ENCODE measurements at regions of chr2 and their contacts with region 1.

Region 1: GRCh38 chr2:162123806-162124758 is 28.0 kb downstream of the GCG start:
- DNase-seq: peak; percentile 9
- ATAC-seq: peak; percentile 57
- H3K4me3 ChIP-seq: no peak overlapping the region
- H3K27ac ChIP-seq: no peak overlapping the region
- H3K4me1 ChIP-seq: peaks cover 7% of the 10 kb centered on the region; the same call in 1 of the 2 replicates
- H3K27me3 ChIP-seq: no peaks in the 10 kb centered on the region
- CTCF ChIP-seq: peak; percentile 48 to 71 (median 55); a peak in 5 of 6 replicates
- EP300 ChIP-seq: no peak
- POLR2A ChIP-seq: no peak
- RAD21 ChIP-seq: peak; percentile 69

Region 2: DNA sequence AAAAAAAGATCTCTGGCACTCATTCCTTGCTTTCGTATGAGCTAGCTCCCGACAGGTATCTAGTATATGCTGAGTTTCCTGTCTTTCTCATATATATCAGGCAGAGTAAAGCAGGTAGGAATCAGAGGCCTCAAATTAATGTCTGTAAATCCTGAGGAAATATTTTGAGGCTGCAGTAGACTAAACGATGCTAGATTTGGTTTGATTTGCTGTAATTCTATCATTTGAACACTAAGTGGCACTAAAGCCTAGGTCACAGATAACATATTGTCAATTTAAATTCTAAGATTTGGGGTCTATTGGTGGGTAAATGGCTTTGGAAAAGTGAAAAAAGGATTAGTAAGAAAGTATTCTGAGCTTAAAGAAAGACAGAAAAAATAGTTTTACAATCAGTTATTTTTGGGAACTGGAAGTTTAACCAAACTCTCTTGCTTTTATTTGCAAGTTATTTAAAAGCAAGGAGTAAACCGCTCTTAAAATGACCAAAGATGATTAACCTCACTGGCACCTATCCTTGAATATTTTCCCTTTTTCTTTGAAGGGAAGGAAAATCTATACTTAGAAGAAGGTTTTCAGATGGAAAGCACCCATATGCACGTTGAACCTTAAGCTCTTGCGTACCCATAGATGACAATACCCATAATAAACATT is 537.4 kb before region 1 on chr2:
- CTCF ChIA-PET with region 1: interaction called, 41 read pairs
- POLR2A ChIA-PET with region 1: no interaction called
- RAD21 ChIA-PET with region 1: interaction called, 3 read pairs
- SMC1A ChIA-PET with region 1: interaction called, 14 read pairs
- in situ Hi-C with region 1: loop called (anchors 5 kb)
- intact Hi-C with region 1: loop called (anchors 2 kb)
- DNase-seq: no peak
- ATAC-seq: peak; percentile 60; the same call in 2 of the 3 replicates
- H3K4me3 ChIP-seq: no peak overlapping the region
- H3K27ac ChIP-seq: no peak overlapping the region
- H3K4me1 ChIP-seq: no peaks in the 10 kb centered on the region
- H3K27me3 ChIP-seq: no peaks in the 10 kb centered on the region
- CTCF ChIP-seq: peak; percentile 60 to 65 (median 61)
- EP300 ChIP-seq: no peak
- POLR2A ChIP-seq: no peak
- RAD21 ChIP-seq: peak; percentile 80

Region 3: DNA sequence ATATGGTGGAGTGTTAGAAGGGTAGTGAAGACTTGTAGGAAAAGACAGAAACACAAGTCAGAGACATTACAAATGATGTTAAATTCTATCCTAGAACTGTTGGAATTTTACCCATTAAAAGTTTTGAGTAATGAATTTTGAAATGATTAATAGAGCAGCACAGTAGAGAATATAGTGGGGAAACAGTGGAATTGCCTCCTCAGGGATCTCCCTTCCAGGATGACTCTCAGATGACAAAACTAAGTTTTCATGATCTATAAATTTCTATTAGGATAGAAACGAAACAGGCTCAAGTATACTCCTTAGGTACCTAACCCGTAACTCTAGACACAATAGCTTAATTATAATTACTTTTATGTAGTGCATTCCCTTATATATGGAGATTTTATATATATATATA is 136.8 kb before region 1 on chr2:
- CTCF ChIA-PET with region 1: interaction called, 12 read pairs
- POLR2A ChIA-PET with region 1: no interaction called
- RAD21 ChIA-PET with region 1: interaction called, 9 read pairs
- SMC1A ChIA-PET with region 1: interaction called, 9 read pairs
- in situ Hi-C with region 1: no loop called
- intact Hi-C with region 1: no loop called
- DNase-seq: no peak
- ATAC-seq: no peak
- H3K4me3 ChIP-seq: no peak overlapping the region
- H3K27ac ChIP-seq: no peak overlapping the region
- H3K4me1 ChIP-seq: peaks cover under 1% of the 10 kb centered on the region; the same call in 1 of the 2 replicates
- H3K27me3 ChIP-seq: no peaks in the 10 kb centered on the region
- CTCF ChIP-seq: no peak
- EP300 ChIP-seq: no peak
- POLR2A ChIP-seq: no peak
- RAD21 ChIP-seq: no peak

Region 4: DNA sequence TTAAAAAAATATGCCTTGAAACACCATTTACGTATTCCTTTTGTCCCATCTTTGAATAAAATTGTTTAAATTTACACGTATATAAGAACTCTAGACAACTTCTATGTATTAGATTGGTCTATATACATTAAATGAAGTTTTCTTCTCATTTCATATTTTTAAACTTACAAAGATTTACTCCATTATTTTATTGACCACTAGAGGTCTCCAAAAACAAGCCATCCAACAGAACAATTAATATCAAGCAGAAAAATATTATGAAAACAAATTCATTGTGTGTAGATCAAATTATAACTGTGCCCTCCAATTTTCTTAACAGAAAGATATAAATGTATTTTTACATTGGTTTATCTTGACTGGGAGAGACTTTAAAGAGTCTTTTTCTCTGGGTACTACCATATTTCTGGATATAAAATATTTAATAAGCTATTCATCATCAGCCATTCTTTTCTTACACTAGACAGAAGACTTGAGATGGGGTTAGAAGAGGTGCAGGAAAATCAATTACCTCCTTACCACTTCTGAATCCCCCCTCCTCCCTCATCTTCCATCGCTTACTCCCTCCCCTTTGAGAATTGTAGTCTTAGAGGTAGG is 116.5 kb before region 1 on chr2:
- CTCF ChIA-PET with region 1: interaction called, 79 read pairs
- POLR2A ChIA-PET with region 1: no interaction called
- RAD21 ChIA-PET with region 1: interaction called, 29 read pairs
- SMC1A ChIA-PET with region 1: interaction called, 90 read pairs
- in situ Hi-C with region 1: loop called (anchors 5 kb)
- intact Hi-C with region 1: loop called (anchors 1 kb)
- DNase-seq: no peak
- ATAC-seq: peak; percentile 33; the same call in 1 of the 3 replicates
- H3K4me3 ChIP-seq: no peak overlapping the region
- H3K27ac ChIP-seq: no peak overlapping the region
- H3K4me1 ChIP-seq: no peaks in the 10 kb centered on the region
- H3K27me3 ChIP-seq: no peaks in the 10 kb centered on the region
- CTCF ChIP-seq: peak; percentile 34 to 60 (median 42); a peak in 3 of 6 replicates
- EP300 ChIP-seq: no peak
- POLR2A ChIP-seq: no peak
- RAD21 ChIP-seq: peak; percentile 64

Region 5: DNA sequence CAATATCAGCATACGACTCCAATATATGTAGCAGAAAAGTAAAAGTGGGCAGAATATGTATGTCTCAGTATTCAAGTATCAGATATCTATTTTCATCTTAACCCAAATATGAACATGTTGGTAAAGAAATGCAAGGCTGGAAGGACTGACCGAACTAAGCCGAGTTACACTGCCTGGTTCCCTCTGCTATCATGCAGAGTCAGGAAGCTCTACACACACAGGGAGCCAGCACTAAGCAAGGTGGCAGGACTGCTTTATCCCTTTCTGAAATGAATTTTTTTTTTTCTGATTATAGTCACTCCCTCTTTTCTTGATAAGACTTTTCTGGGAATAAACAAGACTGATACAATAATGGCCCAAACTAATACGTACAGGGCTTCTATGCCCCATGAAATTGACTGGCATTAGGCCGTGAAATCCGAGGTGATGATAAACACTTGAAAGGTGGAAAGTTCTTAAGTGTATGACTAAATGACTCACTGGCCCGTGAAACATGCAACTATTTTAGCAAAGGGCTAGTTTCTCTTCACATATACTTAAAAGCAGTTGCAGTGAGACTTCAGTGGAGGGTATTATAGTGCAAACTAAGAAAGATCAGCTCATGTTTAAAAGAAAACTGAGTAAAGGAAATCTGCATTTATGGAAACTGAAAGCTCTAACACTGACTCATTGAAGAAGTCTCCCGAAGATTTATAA is 65.0 kb before region 1 on chr2:
- CTCF ChIA-PET with region 1: interaction called, 12 read pairs
- POLR2A ChIA-PET with region 1: interaction called, 7 read pairs
- RAD21 ChIA-PET with region 1: interaction called, 13 read pairs
- SMC1A ChIA-PET with region 1: interaction called, 32 read pairs
- in situ Hi-C with region 1: no loop called
- intact Hi-C with region 1: no loop called
- DNase-seq: peak; percentile 84
- ATAC-seq: peak; percentile 82
- H3K4me3 ChIP-seq: peak overlapping the region; percentile 8; the same call in 1 of the 2 replicates
- H3K27ac ChIP-seq: peak overlapping the region; percentile 78
- H3K4me1 ChIP-seq: peaks cover 57% of the 10 kb centered on the region
- H3K27me3 ChIP-seq: no peaks in the 10 kb centered on the region
- CTCF ChIP-seq: no peak
- EP300 ChIP-seq: peak; percentile 37 to 79; a peak in 2 of 4 replicates
- POLR2A ChIP-seq: no peak
- RAD21 ChIP-seq: no peak

Region 6: DNA sequence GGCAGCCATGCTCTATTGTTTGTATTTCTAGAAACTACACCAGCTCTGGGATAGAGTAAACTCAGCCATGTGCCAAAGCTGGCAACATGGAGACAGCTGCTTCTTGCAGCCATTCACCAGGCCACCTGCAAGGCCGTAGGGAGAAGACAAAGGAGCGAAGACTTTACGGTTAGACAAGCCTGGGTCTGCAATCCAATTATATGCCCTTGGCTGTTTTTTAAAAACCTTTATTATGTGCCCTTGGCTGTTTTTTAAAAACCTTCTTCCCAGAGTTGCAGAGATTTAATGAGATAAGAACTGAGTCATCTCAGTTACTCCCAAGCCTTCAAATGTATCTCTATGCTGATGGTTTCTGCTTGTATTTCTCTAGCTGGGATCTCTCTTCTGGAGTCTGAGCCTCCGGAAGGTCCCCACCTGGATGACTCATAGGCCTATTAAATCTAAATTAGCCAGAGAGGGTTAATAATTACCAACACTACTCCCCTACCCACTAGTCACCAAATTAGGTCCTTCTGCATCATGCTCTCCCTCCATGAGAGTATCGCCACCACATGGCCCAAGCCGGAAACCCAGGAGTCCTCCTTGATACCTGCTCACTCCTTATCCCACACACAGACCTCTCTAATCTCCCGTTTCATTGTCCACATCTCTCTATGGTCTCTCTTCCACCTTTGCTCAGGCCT is 32.6 kb before region 1 on chr2:
- CTCF ChIA-PET with region 1: interaction called, 24 read pairs
- POLR2A ChIA-PET with region 1: no interaction called
- RAD21 ChIA-PET with region 1: interaction called, 3 read pairs
- SMC1A ChIA-PET with region 1: interaction called, 3 read pairs
- in situ Hi-C with region 1: no loop called
- intact Hi-C with region 1: no loop called
- DNase-seq: no peak
- ATAC-seq: peak; percentile 90
- H3K4me3 ChIP-seq: no peak overlapping the region
- H3K27ac ChIP-seq: no peak overlapping the region
- H3K4me1 ChIP-seq: no peaks in the 10 kb centered on the region
- H3K27me3 ChIP-seq: no peaks in the 10 kb centered on the region
- CTCF ChIP-seq: peak; percentile 39 to 58 (median 55); a peak in 4 of 6 replicates
- EP300 ChIP-seq: no peak
- POLR2A ChIP-seq: no peak
- RAD21 ChIP-seq: peak; percentile 62

Region 7: GRCh38 chr2:162153608-162154224 is 29.6 kb after region 1 on chr2:
- CTCF ChIA-PET with region 1: interaction called, 26 read pairs
- POLR2A ChIA-PET with region 1: no interaction called
- RAD21 ChIA-PET with region 1: interaction called, 3 read pairs
- SMC1A ChIA-PET with region 1: interaction called, 3 read pairs
- in situ Hi-C with region 1: no loop called
- intact Hi-C with region 1: no loop called
- DNase-seq: no peak
- ATAC-seq: peak; percentile 99
- H3K4me3 ChIP-seq: no peak overlapping the region
- H3K27ac ChIP-seq: no peak overlapping the region
- H3K4me1 ChIP-seq: no peaks in the 10 kb centered on the region
- H3K27me3 ChIP-seq: no peaks in the 10 kb centered on the region
- CTCF ChIP-seq: peak; percentile 80 to 90 (median 86)
- EP300 ChIP-seq: no peak
- POLR2A ChIP-seq: no peak
- RAD21 ChIP-seq: peak; percentile 70

Region 8: GRCh38 chr2:162661618-162662017 is 537.5 kb after region 1 on chr2:
- CTCF ChIA-PET with region 1: no interaction called
- POLR2A ChIA-PET with region 1: no interaction called
- RAD21 ChIA-PET with region 1: no interaction called
- SMC1A ChIA-PET with region 1: no interaction called
- in situ Hi-C with region 1: no loop called
- intact Hi-C with region 1: no loop called
- DNase-seq: no peak
- ATAC-seq: no peak
- H3K4me3 ChIP-seq: no peak overlapping the region
- H3K27ac ChIP-seq: no peak overlapping the region
- H3K4me1 ChIP-seq: no peaks in the 10 kb centered on the region
- H3K27me3 ChIP-seq: no peaks in the 10 kb centered on the region
- CTCF ChIP-seq: no peak
- EP300 ChIP-seq: no peak
- POLR2A ChIP-seq: no peak
- RAD21 ChIP-seq: no peak

Measured in GM12878 (cell line).